ENCODE measurements at regions of chrX and their contacts with region 1.

Region 1: DNA sequence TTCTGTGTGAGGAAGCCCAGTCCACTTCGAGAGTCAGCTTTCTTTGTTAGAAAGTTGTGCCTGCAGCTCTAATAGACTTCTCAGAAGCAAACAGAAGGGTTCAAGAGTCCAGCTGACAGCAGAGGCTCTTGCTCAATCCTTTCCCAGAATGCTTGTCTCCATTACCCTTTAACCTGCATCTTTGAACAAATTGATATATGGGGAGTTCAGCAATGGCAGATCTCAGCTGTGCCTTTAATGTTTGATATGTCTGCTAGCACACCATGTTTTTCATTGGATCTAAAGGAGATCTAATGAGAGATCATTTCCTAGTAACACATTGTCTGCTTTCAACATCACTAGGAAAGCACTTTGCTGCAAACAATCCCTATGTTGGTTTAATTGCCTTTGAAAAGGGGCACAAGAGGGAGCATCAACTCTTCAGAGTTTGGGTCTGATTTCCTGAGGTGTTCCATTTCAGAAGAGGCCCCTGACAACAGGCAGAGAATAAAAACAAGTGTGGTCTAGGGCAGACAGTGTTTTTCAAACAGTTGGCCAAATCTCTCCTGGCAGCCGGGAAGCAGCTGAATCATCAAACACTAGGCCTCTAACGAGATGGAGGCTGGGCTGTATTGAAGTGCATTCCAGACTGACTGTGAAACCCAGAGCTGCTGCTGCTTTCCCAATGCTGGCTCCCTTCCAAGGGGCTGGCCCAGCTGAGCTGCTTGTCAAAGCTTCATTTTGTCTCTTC is 55.5 kb downstream of the LUZP4 start:
- DNase-seq: peak; percentile 62 to 91
- ATAC-seq: peak; percentile 96 to 97
- H3K4me3 ChIP-seq: no peak overlapping the region
- H3K27ac ChIP-seq: peak overlapping the region; percentile 88 to 94
- H3K4me1 ChIP-seq: peaks cover 66% of the 10 kb centered on the region
- CTCF ChIP-seq: no peak
- EP300 ChIP-seq: no peak
- POLR2A ChIP-seq: no peak
- RAD21 ChIP-seq: peak in 1 of 2 experiments; percentile 25; a peak in 2 of 5 replicates

Region 2: GRCh38 chrX:115560978-115561604 is 216.0 kb after region 1 on chrX and contains the start of gene PLS3:
- CTCF ChIA-PET with region 1: no interaction called
- POLR2A ChIA-PET with region 1: interaction called, 32 read pairs
- DNase-seq: peak; percentile 89 to 94
- ATAC-seq: peak; percentile 88 to 92
- H3K4me3 ChIP-seq: peak within 1 kb of the TSS; percentile 83
- H3K27ac ChIP-seq: peak within 1 kb of the TSS; percentile 95 to 99
- H3K4me1 ChIP-seq: peaks cover 66% of the 10 kb centered on the region
- CTCF ChIP-seq: no peak
- EP300 ChIP-seq: no peak
- POLR2A ChIP-seq: peak; percentile 72
- RAD21 ChIP-seq: no peak
- polyA plus RNA-seq, gene PLS3: 411 and 437 TPM in 2 replicates